HEK293T (cell line): ENCODE measurements at regions of chr2 and their contacts with region 1.

Region 1: DNA sequence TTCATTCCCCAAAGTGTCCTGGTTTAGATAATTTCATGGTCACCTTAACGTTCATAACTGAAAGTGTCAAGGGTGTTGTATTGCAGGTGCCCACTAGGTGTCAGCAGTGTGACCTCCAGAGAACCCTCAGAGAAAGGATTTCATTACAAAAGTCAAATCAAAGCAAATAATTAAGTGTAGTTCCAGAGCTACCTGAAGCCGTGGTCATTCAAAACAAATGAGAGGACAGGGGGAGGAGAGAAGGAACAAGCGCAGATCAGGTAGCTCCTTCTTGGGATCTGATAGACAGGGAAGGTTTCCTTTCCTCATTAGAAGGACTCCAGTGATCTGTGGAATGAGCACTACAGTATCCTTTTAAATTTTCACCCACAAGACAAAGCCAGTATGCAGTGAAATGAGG is at the start of gene SLC9A4:
- DNase-seq: peak; percentile 44

Region 2: DNA sequence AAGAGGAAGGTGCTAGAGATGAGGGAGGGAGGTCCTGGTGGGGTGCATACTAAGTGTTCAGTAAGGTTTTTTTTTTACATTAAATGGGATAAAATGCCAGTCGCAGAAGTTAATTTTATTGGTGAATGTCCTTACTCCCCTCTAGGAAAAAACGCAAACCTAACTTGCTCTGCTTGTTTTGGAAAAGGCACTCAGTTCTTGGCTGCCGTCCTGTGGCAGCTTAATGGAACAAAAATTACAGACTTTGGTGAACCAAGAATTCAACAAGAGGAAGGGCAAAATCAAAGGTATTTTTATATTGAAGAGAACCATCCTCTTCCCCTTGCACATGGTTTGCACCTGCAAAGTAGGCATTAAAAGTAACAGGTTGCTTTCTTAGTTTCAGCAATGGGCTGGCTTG is 130.1 kb before region 1 on chr2:
- CTCF ChIA-PET with region 1: no interaction called
- POLR2A ChIA-PET with region 1: no interaction called
- DNase-seq: no peak

Region 3: DNA sequence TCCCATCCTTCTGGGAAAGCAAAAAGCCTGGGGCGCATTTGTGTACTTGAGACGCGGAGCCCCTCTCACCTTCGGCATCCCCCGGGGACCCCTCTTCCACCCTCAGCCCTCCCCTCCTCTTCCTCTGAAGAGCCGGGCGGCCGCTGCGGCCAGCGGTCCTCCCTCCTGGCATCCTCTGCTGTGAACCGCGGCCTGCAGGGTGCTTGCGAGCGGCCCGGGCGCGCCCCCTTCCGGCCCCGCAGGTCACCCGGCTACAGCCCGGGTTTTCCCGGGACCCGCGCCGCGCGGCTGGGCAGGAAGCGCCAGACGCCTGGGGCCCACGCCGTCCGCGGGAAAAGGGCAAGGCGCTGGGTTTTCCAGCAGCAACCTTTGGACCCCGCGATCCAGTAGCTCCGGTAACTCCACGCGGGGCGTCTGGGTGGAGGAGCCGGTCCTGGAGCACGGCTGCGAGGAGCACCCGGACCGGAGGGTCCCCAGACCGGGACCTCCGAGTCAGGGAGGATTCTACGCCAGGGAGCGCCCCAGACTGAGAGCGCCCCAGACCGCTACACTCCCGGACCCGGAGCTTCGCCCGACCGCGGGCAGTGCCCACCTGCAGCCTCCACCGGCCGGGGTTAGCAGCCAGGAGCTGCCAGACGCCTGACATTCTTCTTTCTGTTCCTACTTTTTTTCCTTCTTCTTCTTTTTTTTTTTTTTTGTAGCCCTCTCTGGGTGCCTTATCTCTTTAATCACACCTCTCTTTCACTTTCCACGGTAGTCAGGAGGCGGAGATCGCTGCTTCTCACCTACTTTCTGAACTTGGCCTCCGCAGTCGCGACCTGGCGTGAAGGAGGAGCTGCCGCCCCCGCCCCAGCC is 117.3 kb before region 1 on chr2 and contains the start of gene IL18R1:
- CTCF ChIA-PET with region 1: no interaction called
- POLR2A ChIA-PET with region 1: no interaction called
- DNase-seq: peak; percentile 77

Region 4: DNA sequence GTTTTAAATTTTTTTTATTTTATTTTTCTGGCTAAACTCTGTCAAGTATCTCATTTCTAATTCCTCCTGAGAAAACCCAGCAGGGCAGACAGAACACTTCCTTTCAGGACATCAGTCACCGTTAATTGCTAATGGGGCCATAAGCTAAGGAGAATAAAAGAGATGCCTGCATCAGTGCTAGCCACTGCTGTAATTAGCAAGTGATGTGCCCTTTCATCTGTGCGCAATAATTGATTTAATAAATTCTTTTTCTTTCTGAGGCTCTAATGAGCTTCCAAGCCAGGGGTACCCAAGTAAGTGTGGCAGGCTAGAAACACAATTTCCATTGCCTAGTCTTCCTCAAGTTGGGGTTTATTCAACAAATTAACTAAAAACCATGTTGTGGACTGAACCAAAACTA is 65.5 kb after region 1 on chr2:
- CTCF ChIA-PET with region 1: no interaction called
- POLR2A ChIA-PET with region 1: no interaction called
- DNase-seq: no peak

Region 5: DNA sequence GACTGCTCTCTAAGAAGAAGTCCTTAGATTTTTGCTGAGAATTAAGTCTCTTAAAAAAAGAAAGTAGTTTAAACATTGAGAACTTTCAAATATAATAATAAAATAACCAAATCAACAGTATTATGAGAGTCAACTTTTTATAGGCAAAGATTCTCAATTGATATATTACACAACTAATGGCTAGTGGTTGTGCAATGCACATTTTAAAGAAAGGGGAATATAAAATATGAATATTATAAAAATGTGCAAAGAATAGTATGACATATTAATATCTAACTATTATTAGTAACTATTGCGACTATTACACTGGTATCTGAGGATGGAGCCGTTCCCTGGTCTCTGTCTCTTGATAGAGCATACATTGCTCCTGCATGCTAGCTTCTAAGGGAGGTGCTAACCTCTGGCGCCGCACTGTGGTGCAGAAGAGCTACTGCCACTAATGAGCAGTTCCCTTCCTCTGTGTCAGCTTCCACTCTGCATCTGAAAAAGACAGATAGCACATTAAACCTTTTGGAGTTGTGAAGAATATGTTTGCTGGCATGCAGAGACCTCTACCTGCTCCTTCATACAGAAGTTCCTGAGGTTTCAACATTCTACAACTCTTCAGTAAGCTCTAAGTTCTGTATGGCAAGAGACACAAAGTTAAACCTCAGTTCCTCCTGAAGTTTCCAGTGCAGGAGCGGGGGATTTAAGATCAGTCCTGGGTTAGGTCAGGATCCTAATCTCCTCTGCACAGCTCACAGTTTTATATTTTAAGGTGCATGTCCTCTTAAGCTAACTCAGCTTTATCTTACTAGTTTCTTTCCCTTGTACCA is 142.8 kb after region 1 on chr2:
- CTCF ChIA-PET with region 1: interaction called, 15 read pairs
- POLR2A ChIA-PET with region 1: no interaction called
- DNase-seq: peak; percentile 75

Region 6: GRCh38 chr2:102637358-102637757 is 164.3 kb after region 1 on chr2:
- CTCF ChIA-PET with region 1: no interaction called
- POLR2A ChIA-PET with region 1: no interaction called
- DNase-seq: no peak

Region 7: DNA sequence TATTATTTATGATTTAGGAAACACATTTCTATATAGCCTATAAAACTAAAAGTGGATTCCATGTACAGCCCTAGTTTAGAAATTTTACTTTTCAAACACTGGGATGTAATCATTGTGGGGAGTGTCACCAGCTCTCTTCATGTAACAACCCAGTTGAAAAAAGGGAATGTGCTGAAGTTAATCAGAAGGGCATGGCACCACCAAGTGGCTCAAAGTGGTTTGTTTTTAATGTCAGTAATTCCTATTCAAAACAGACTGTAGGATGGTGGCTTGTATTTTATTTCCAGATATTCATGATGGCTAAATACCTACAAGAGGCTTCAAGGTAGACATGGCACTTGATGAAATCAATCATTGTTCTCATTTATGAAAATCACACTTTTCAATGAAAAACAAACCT is 230.7 kb after region 1 on chr2:
- CTCF ChIA-PET with region 1: interaction called, 10 read pairs
- POLR2A ChIA-PET with region 1: no interaction called
- DNase-seq: peak; percentile 28